Naive thymus-derived CD4-positive, alpha-beta T cell (primary cell): ENCODE measurements at regions of chr11 and their contacts with region 1.

Region 1: DNA sequence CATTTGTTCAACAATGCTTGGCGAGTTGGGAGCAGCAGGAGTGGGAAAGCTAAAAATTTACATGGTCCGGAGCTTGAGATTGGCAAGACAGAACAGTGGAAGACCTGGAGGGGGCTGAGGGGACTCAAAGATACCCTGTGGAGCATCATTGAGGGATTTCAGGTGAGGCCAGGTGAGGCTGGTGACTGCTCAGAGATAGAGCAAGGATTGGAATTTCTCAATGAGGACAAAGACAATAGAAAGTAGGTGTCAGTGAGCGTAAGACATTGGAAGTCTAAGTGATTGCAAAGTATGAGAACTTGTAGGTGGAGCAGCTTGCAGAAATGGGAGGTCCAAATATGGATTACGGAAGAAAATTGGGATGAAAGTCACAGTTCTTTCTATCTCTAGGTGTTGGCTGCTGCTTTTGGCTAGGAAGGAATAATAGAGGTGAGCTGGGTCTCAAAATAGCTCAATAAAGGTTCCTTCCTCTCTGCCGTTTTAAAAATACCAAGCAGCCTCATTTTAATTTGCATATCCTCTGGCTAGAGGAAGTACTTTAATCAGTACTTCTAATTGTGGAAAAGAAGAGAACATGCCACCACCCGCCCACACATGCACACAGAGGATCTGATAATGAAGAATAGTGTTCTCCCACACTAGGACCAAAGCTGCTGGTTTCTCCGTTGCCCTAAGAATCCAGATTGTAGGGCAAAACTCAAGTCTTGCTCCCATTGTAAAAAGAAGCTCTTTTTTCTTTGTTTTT is 41.8 kb upstream of the SORL1-AS1 start:
- DNase-seq: peak in 7 of 9 donors; percentile 11 to 36 (median 26)
- ATAC-seq: peak; percentile 72
- H3K4me3 ChIP-seq: no peak overlapping the region
- H3K4me3 Mint-ChIP-seq: peak overlapping the region; percentile 51 to 83 (median 70)
- H3K27ac ChIP-seq: peak overlapping the region; percentile 53
- H3K27ac Mint-ChIP-seq: peak overlapping the region; percentile 44 to 89 (median 79)
- H3K4me1 ChIP-seq: peaks cover 15 to 31% of the 10 kb centered on the region in 2 donors
- H3K4me1 Mint-ChIP-seq: peaks cover 34 to 84% (median 72%) of the 10 kb centered on the region in 7 donors
- H3K27me3 ChIP-seq: no peaks in the 10 kb centered on the region
- H3K27me3 Mint-ChIP-seq: no peaks in the 10 kb centered on the region

Region 2: DNA sequence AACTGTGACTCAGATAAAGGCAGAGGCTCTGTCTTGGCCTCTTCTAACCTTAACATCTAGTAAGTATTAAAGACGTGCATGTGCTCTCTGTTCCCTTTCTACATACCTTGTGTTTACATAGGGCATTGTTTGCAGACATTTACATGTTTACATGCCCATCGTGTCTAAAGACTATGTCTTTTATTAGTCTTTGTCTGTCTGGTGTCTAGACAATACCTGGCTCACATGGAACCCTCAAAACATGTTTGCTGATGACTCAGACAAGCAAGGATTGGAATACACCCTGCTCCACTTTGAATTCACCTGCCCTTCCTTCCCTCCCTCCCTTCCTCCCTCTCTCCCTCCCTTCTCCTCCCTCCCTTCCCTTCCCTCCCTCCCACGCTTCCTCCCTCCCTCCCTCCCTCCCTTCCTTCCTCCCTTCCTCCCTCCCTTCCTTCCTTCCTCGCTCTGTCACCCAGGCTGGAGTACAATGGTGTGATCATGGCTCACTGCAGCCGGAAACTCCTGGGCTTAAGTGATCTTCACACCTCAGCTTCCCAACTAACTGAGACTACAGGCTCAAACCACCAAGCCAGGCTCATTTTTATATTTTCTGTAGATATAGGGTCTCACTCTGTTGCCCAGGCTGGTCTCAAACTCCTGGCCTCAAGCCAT is 18.0 kb before region 1 on chr11:
- CTCF ChIA-PET with region 1: interaction called, 3 read pairs
- POLR2A ChIA-PET with region 1: interaction called, 4 read pairs
- intact Hi-C with region 1: loop called in 1 of 2 experiments (anchors 2 kb)
- DNase-seq: no peak
- ATAC-seq: no peak
- H3K4me3 ChIP-seq: no peak overlapping the region
- H3K4me3 Mint-ChIP-seq: peak overlapping the region in 2 of 10 donors; percentile 6 to 75
- H3K27ac ChIP-seq: no peak overlapping the region
- H3K27ac Mint-ChIP-seq: peak overlapping the region; percentile 23 to 90 (median 66)
- H3K4me1 ChIP-seq: peaks cover 13 to 48% of the 10 kb centered on the region in 2 donors
- H3K4me1 Mint-ChIP-seq: peaks cover 50 to 95% (median 83%) of the 10 kb centered on the region in 7 donors
- H3K27me3 ChIP-seq: no peaks in the 10 kb centered on the region
- H3K27me3 Mint-ChIP-seq: no peaks in the 10 kb centered on the region

Region 3: DNA sequence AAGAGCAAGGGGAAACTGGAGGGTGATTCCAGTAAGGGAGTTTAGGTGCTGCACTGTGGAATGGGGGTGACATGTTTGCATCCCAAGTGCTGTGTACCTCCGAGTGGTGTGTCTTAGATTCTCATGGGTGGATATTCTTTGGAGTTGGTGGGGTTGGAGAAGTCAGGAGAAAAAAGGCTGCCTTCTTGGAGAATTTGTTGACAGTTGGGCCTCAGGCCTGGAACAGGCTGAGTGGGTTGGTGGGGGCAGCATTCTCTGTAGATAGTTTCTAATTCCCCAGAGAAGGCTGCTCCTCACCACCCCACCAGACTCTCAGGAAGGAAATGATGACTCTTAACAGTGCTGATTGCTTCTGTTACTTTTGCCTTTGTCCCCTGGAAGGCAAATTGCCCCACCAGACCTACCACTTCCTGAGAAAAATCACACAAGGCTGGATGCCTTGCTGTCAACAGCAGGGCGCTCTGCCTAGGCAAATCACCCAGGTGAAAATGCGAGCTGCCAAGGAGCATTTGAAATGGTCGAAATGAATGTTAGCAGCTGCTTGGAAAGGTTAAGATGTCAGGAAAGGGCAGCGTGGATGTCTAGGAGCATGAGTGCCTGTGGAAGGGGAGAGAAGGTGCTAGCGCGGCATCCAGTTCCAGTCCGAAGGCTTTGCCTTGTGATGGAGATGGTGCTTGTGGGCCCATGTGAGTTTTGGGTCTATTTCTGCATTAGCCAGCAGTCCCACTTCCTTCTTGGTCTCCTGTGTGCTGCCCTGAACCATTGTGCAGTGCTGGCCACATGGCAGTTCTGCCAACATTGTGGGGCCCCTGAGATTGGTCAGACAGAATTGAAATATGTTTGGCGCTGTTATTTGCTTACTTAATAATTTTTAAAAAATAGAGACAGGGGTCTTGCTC is 12.0 kb before region 1 on chr11:
- CTCF ChIA-PET with region 1: interaction called, 9 read pairs
- POLR2A ChIA-PET with region 1: interaction called, 24 read pairs
- intact Hi-C with region 1: loop called in 1 of 2 experiments (anchors 1 kb)
- DNase-seq: peak in 8 of 9 donors; percentile 45 to 72 (median 67)
- ATAC-seq: peak; percentile 87
- H3K4me3 ChIP-seq: peak overlapping the region; percentile 30
- H3K4me3 Mint-ChIP-seq: peak overlapping the region; percentile 73 to 89 (median 86)
- H3K27ac ChIP-seq: peak overlapping the region; percentile 61
- H3K27ac Mint-ChIP-seq: peak overlapping the region; percentile 84 to 97 (median 94)
- H3K4me1 ChIP-seq: peaks cover 25 to 44% of the 10 kb centered on the region in 2 donors
- H3K4me1 Mint-ChIP-seq: peaks cover 50 to 90% (median 81%) of the 10 kb centered on the region in 7 donors
- H3K27me3 ChIP-seq: no peaks in the 10 kb centered on the region
- H3K27me3 Mint-ChIP-seq: no peaks in the 10 kb centered on the region

Region 4: GRCh38 chr11:121510438-121510837 is 15.9 kb after region 1 on chr11:
- CTCF ChIA-PET with region 1: no interaction called
- POLR2A ChIA-PET with region 1: interaction called, 8 read pairs
- intact Hi-C with region 1: loop called in 1 of 2 experiments (anchors 2 kb)
- DNase-seq: no peak
- ATAC-seq: no peak
- H3K4me3 ChIP-seq: no peak overlapping the region
- H3K4me3 Mint-ChIP-seq: no peak overlapping the region
- H3K27ac ChIP-seq: no peak overlapping the region
- H3K27ac Mint-ChIP-seq: peak overlapping the region in 8 of 9 donors; percentile 1 to 77 (median 51)
- H3K4me1 ChIP-seq: peaks cover 6 to 19% of the 10 kb centered on the region in 2 donors
- H3K4me1 Mint-ChIP-seq: peaks cover 36 to 92% (median 83%) of the 10 kb centered on the region in 7 donors
- H3K27me3 ChIP-seq: no peaks in the 10 kb centered on the region
- H3K27me3 Mint-ChIP-seq: no peaks in the 10 kb centered on the region

Region 5: GRCh38 chr11:121534131-121535093 is 39.9 kb after region 1 on chr11:
- CTCF ChIA-PET with region 1: no interaction called
- POLR2A ChIA-PET with region 1: no interaction called
- intact Hi-C with region 1: loop called in 1 of 2 experiments (anchors 5 kb)
- DNase-seq: no peak
- ATAC-seq: no peak
- H3K4me3 ChIP-seq: no peak overlapping the region
- H3K4me3 Mint-ChIP-seq: peak overlapping the region in 1 of 10 donors; percentile 32
- H3K27ac ChIP-seq: no peak overlapping the region
- H3K27ac Mint-ChIP-seq: peak overlapping the region in 6 of 9 donors; percentile 22 to 80 (median 70)
- H3K4me1 ChIP-seq: peaks cover 0 to 9% of the 10 kb centered on the region in 2 donors
- H3K4me1 Mint-ChIP-seq: peaks cover 27 to 71% (median 57%) of the 10 kb centered on the region in 7 donors
- H3K27me3 ChIP-seq: no peaks in the 10 kb centered on the region
- H3K27me3 Mint-ChIP-seq: no peaks in the 10 kb centered on the region

Region 6: DNA sequence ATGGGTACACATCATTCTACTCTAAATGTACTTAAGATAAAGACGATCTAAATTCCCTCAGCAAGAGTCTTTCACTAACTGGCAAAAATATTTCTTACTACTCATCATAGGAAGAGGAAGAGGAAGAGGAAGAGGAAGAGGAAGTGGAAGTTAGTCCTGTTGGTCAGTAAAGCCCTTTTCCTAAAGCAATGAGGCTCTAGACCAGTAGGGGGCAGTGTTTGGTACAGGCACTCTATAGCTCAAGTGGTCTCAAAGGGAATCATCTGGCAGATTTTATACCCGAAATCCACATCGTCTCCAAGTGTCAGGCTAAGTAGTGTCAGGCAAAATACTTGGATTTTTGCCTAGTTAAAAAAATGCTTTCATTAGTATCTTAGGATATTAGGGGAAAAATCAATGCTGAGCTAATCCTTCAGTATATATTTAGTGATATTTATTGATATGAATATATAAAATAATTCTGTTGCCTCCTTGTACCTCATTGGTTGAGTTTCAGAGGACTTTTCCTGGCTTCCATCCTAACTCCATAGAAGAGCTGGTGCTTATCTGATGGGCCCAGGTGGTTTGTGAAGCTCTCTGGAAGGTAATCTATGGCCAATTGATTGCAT is 613.8 kb after region 1 on chr11:
- CTCF ChIA-PET with region 1: no interaction called
- POLR2A ChIA-PET with region 1: no interaction called
- intact Hi-C with region 1: no loop called
- DNase-seq: no peak
- ATAC-seq: no peak
- H3K4me3 ChIP-seq: no peak overlapping the region
- H3K4me3 Mint-ChIP-seq: no peak overlapping the region
- H3K27ac ChIP-seq: no peak overlapping the region
- H3K27ac Mint-ChIP-seq: no peak overlapping the region
- H3K4me1 ChIP-seq: no peaks in the 10 kb centered on the region
- H3K4me1 Mint-ChIP-seq: no peaks in the 10 kb centered on the region
- H3K27me3 ChIP-seq: no peaks in the 10 kb centered on the region
- H3K27me3 Mint-ChIP-seq: peaks cover 0 to 33% (median 24%) of the 10 kb centered on the region in 5 donors